ENCODE measurements at regions of chr20 and their contacts with region 1.

Region 1: GRCh38 chr20:31822421-31823330 is 3.5 kb downstream of the MYLK2 start:
- DNase-seq: peak; percentile 92
- CTCF ChIP-seq: peak; percentile 96

Region 2: DNA sequence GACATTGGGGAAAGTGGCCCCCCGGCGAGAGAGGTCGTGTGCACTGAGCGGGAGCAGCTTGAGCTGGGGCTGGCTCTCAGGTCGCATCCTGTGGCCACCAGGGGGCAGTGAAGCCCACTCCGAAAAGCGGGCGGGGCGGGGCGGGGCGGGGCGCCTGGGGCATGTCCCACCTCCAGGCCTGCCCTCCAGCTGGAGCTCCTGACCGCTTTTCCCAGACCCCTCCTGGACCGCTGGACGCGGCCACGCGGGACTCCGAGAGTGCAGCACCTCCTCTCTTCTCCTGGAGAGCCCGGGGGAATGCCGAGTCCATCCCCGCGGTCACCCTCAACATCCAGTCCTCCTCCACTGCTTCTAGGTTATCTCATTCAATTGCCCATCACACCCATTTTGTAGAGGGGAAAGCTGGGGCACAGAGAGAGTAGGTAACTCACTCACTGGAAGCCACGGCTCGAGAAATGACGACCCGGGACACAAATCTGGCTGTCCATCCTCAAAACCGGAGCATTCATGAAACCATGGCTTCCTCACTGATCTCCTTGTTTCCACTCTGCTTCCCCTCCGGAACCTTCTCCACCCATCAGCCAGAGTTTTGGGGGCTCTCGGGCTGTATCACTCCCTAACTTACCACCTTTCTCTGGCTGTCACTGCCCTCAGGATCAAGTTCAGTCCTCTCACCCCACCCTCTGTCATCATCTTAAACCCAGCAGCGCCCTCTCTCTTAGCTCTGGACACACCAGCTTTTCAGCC is 160.9 kb before region 1 on chr20:
- CTCF ChIA-PET with region 1: no interaction called
- POLR2A ChIA-PET with region 1: no interaction called
- DNase-seq: peak; percentile 91
- CTCF ChIP-seq: peak; percentile 73

Region 3: GRCh38 chr20:31806564-31807355 is 15.9 kb before region 1 on chr20:
- CTCF ChIA-PET with region 1: interaction called, 42 read pairs
- POLR2A ChIA-PET with region 1: no interaction called
- DNase-seq: no peak
- CTCF ChIP-seq: no peak

Region 4: GRCh38 chr20:31811796-31812728 is 10.6 kb before region 1 on chr20:
- CTCF ChIA-PET with region 1: interaction called, 42 read pairs
- POLR2A ChIA-PET with region 1: no interaction called
- DNase-seq: no peak
- CTCF ChIP-seq: no peak

Region 5: DNA sequence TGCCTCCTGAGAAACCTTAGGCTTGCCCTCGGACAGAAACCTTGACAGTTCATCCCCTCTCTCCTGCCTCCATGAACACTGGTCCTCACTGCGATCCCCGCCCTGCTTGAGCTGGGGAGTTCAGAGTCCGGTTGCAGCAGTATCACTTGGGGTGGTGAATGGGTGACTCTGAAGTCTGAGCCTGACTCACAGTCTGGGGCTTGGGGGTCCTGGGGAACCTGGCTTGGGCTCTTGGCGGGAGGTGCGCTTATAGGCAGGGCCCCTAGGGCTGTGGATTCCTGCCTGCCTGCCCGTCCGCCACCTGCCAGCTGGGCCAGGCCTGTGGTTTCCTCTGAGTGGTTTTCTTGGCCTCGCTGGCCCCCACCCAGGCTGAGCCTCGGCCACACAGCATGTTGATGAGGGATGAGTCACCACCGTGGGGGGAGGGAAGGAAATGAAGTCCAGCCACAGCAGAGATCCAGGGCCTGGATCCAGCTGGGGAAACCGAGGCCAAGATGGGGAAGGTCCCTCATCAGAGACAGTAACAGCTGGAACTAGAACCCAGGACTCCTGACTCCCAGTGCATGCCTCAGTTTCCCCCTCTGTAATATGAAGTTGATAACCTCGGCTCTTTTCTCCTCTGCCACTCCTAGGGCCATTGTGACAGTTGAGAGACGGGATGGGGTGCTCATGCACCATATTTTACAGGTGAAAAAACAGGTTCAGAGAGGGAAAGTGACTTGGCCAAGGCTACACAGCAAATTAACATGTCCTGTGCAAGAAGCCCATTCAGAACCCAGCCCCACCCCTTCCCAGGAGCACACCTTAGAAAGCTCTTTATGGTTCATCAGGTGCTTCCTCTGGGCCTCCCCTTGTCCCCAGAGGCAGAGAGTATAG is 13.5 kb after region 1 on chr20:
- CTCF ChIA-PET with region 1: interaction called, 154 read pairs
- POLR2A ChIA-PET with region 1: no interaction called
- DNase-seq: peak; percentile 71
- CTCF ChIP-seq: no peak

Region 6: GRCh38 chr20:31842471-31843157 is 19.9 kb after region 1 on chr20:
- CTCF ChIA-PET with region 1: interaction called, 154 read pairs
- POLR2A ChIA-PET with region 1: no interaction called
- DNase-seq: no peak
- CTCF ChIP-seq: no peak

Measured in GM10248 (cell line).